Posterior vena cava (tissue), 2 donors: ENCODE measurements at regions of chr2 and their contacts with region 1.

Region 1: GRCh38 chr2:23595601-23596251 is 210.7 kb downstream of the KLHL29 start:
- DNase-seq: peak; percentile 75

Region 2: DNA sequence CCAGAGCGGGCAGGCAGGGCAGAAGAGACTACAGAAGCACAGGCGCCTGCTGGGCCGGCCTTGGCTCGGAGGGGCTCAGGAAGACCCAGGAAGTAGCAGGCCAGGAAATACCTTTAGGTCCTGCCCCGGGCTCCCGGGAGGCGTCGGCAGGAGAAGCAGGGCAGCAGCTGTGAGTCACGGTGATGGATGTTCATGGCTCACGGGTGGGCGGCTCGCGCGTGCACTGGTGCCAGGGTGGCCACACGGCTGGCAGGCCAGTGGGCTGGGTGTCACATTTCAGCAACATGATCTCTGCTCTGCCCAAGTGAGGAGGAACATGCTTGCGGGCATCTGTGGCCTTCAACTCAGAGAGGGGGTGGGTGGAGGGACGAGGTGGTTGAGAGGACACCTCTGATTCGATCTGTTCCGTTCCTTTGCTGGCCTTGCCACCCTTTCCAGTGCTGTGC is 71.4 kb before region 1 on chr2:
- intact Hi-C with region 1: loop called in 1 of 2 experiments (anchors 10 kb)
- DNase-seq: no peak

Region 3: GRCh38 chr2:23563673-23564619 is 31.8 kb before region 1 on chr2:
- intact Hi-C with region 1: loop called in 1 of 2 experiments (anchors 5 kb)
- DNase-seq: peak; percentile 86